ENCODE measurements at regions of chr22 and their contacts with region 1.

Region 1: DNA sequence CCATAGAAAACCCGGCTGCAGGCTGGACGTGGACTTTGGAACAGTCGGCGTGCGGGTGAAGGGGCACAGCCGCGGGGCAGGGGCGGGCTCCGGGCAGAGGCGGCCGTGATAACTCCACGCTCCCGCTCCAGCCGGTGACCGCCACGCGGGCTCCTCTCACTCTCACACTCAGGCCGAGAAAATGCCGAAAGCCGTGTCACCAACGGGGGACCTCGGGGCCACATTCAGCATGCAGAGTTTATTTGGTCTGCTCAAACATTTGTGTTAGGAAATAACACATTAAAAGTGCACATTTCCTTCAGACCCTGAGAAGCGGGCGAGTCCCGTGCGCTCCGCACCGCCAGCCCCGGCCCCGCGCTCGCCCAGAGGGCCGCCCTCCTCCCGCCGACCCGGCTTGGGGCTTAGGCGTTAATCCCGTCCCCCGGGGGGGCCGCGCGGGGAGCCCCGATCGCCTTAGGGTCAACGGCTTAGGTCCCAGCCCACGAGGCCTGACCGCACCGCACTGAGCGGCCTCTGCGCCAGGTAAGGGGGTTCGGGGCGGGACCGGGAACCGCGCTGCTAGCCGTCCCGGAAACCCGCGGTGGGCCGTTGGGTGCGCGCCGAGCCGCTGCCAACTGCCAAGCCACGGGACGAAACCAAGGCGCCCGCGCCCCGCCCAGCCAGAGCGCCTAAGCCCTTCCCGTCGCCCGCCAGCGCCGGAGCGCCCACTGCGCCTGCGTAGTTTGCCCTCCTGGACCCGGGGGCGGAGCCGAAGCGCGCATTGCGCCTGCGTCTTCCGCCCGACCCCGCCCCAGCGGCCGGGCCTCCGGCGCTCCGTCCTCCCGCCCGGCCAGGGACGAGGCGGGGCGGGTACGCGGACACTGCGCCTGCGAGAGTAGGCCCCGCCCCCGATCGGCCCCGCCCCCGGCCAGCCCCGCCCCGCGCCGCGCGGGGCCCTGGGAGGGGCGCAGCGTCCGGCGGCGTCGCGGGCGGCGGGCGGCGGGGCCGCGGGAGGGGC is at the start of gene ZBED4:
- DNase-seq: peak; percentile 93 to 99 (median 98)
- ATAC-seq: peak; percentile 76 to 78
- H3K4me3 Mint-ChIP-seq: peak within 1 kb of the TSS; percentile 84 to 98 (median 94)
- H3K27ac Mint-ChIP-seq: peak within 1 kb of the TSS; percentile 91 to 98 (median 95)
- H3K4me1 Mint-ChIP-seq: peaks cover 35 to 57% (median 47%) of the 10 kb centered on the region in 4 donors
- H3K27me3 Mint-ChIP-seq: peaks cover 0 to 1% (median 0%) of the 10 kb centered on the region in 5 donors
- polyA plus RNA-seq, gene ZBED4: 5.5 to 11.4 (median 8.1) TPM

Region 2: GRCh38 chr22:49815641-49816071 is 37.5 kb before region 1 on chr22:
- POLR2A ChIA-PET with region 1: no interaction called
- DNase-seq: no peak
- ATAC-seq: peak in 1 of 2 donors; percentile 10
- H3K4me3 Mint-ChIP-seq: peak overlapping the region in 2 of 10 donors; percentile 13 to 15
- H3K27ac Mint-ChIP-seq: peak overlapping the region in 6 of 10 donors; percentile 20 to 84 (median 56)
- H3K4me1 Mint-ChIP-seq: peaks cover 42 to 85% (median 83%) of the 10 kb centered on the region in 4 donors
- H3K27me3 Mint-ChIP-seq: no peaks in the 10 kb centered on the region

Region 3: DNA sequence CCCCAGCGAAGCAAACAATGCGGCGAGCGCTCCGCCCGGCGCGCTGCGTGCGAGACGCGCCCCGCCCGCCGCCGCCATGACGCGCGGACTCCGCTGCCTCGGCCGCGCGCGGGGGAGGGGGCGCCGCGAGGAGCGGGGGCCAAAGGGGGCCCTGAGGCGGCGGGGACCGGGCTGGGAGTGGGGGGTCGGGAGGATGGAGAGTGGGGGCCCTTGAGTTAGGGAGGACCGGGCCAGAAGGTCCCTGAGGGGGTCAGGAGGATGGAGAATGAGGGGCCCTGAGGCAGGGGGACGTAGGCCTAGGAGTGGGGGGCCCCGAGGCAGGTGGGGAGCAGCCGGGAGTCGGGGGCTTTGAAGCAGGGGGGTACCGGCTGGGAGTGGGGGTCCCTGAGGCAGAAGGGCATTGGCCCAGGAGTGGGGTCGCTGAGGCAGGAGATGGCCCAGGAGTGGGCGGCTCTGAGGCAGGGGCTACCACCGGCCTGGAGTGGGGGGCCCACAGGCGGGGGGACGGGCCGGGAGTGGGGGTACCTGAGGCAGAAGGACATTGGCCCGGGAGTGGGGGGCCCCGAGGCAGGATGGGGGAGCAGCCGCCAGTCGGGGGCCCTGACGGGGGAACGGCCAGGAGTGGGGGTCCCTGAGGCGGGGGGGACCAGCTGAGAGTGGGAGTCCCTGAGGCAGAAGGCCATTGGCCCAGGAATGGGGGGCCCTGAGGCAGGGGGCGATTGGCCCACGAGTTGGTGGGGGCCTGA is 25.2 kb before region 1 on chr22 and contains the start of gene BRD1:
- POLR2A ChIA-PET with region 1: interaction called, 14 read pairs
- DNase-seq: peak in 9 of 10 donors; percentile 20 to 58 (median 51)
- ATAC-seq: peak; percentile 51 to 66
- H3K4me3 Mint-ChIP-seq: peak within 1 kb of the TSS; percentile 86 to 96 (median 93)
- H3K27ac Mint-ChIP-seq: peak within 1 kb of the TSS; percentile 80 to 97 (median 96)
- H3K4me1 Mint-ChIP-seq: peaks cover 26 to 44% (median 42%) of the 10 kb centered on the region in 4 donors
- H3K27me3 Mint-ChIP-seq: no peaks in the 10 kb centered on the region
- polyA plus RNA-seq, gene BRD1: 1.9 to 3.7 (median 2.2) TPM

Region 4: DNA sequence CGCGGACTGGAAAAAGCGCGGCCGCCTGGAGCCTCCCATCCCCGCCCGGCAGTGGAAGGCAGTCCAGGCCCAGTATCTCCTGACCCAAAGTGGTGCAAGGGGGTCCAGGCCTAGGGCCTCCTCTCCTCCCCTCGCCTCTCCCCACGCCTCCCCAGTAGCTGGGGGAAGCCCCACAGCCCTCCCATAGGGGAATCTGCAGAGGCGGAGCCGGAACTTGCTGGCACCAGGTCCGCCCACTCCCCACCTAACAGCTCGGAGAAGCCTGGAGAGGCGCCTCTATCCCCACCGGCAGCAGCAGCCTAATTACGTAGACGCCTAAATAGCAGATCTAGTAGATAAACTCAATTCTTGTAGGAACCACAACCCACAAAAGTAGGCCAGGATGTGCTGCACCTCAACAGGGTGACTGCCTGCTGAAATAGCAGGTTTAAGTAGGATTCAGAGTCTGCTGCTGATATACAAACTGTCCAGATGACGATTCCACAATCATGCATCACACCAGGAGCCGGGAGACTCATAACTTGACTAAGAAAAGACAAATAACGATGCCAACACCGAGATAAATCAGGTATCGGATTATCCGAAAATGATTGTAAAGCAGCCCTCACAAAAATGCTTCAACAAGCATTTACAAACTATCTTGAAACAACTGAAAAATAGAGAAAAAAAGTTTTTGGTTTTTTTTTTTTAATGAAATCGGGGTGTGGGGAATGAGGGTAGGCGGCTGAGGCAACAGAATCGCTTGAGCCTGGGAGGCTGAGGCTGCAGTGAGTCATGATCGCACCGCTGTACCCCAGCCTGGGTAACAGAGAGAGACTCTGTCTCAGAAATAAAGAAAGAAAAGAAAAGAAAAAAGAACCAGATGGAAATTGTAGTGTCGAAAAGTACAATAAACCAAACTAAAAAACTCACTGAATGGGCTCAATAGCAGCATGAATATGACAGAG is 14.2 kb before region 1 on chr22:
- POLR2A ChIA-PET with region 1: interaction called, 22 read pairs
- DNase-seq: peak; percentile 67 to 94 (median 92)
- ATAC-seq: peak; percentile 93 to 97
- H3K4me3 Mint-ChIP-seq: peak overlapping the region; percentile 76 to 87 (median 82)
- H3K27ac Mint-ChIP-seq: peak overlapping the region; percentile 88 to 99 (median 94)
- H3K4me1 Mint-ChIP-seq: peaks cover 16 to 31% (median 26%) of the 10 kb centered on the region in 4 donors
- H3K27me3 Mint-ChIP-seq: no peaks in the 10 kb centered on the region

Region 5: GRCh38 chr22:49925525-49926128 is 72.4 kb after region 1 on chr22:
- POLR2A ChIA-PET with region 1: interaction called, 18 read pairs
- DNase-seq: peak; percentile 57 to 87 (median 83)
- ATAC-seq: peak; percentile 89 to 92
- H3K4me3 Mint-ChIP-seq: peak overlapping the region; percentile 77 to 92 (median 86)
- H3K27ac Mint-ChIP-seq: peak overlapping the region; percentile 95 to 99 (median 98)
- H3K4me1 Mint-ChIP-seq: peaks cover 12 to 43% (median 33%) of the 10 kb centered on the region in 4 donors
- H3K27me3 Mint-ChIP-seq: no peaks in the 10 kb centered on the region

Region 6: GRCh38 chr22:49992921-49993648 is 139.9 kb after region 1 on chr22:
- POLR2A ChIA-PET with region 1: no interaction called
- DNase-seq: peak; percentile 40 to 82 (median 56)
- ATAC-seq: peak; percentile 94 to 99
- H3K4me3 Mint-ChIP-seq: peak overlapping the region in 1 of 10 donors; percentile 36
- H3K27ac Mint-ChIP-seq: peak overlapping the region in 4 of 10 donors; percentile 24 to 50 (median 43)
- H3K4me1 Mint-ChIP-seq: peaks cover 4 to 8% (median 6%) of the 10 kb centered on the region in 4 donors
- H3K27me3 Mint-ChIP-seq: peaks cover 0 to 2% (median 0%) of the 10 kb centered on the region in 5 donors

Region 7: GRCh38 chr22:50173311-50173982 is 320.3 kb after region 1 on chr22:
- POLR2A ChIA-PET with region 1: no interaction called
- DNase-seq: no peak
- ATAC-seq: no peak
- H3K4me3 Mint-ChIP-seq: peak overlapping the region in 1 of 10 donors; percentile 29
- H3K27ac Mint-ChIP-seq: peak overlapping the region in 1 of 10 donors; percentile 38
- H3K4me1 Mint-ChIP-seq: peaks cover 2 to 18% (median 9%) of the 10 kb centered on the region in 4 donors
- H3K27me3 Mint-ChIP-seq: peaks cover 2 to 44% (median 25%) of the 10 kb centered on the region in 5 donors

Region 8: DNA sequence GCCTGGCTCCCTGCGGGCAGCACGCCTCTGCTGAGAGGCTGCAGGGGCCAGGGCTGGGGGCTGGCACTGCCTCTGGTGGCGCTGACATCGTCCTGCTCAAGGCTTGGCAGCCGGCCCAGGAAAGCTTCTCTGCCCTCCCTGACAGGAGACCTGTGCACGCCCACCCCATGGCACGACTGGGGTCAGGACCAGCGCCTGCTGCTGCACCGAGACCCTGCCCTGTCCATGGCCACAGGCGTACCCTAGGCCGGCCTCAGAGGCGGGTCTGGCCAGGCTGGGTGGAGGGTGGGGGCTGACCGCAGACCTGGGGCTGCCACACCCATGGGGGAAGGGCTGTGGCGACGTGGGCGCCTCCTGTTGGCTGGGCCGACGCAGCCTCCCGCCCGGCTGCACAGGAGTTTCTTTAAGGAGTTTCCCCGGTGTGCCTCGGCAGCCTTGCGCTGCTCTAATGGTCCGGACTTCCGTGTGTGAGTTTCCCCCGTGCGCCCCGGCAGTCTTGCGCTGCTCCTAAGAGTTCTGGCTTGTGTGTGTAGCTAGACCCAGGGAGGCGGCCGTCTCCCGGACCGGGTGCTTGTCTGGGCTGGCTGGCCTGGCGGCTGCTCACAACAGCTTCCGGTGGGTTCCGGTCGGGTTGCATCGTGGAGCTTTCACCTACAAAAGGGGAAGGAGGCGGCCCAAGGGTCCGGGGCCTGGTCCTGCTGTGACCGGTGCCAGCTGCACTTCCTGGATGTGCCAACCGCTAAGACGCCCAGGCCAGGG is 337.2 kb after region 1 on chr22:
- POLR2A ChIA-PET with region 1: no interaction called
- DNase-seq: peak; percentile 72 to 93 (median 82)
- ATAC-seq: peak; percentile 51
- H3K4me3 Mint-ChIP-seq: peak overlapping the region; percentile 85 to 95 (median 90)
- H3K27ac Mint-ChIP-seq: peak overlapping the region; percentile 94 to 100 (median 100)
- H3K4me1 Mint-ChIP-seq: peaks cover 18 to 62% (median 51%) of the 10 kb centered on the region in 4 donors
- H3K27me3 Mint-ChIP-seq: no peaks in the 10 kb centered on the region

Measured in naive thymus-derived CD8-positive, alpha-beta T cell (primary cell).